ENCODE measurements at regions of chr2 and their contacts with region 1.

Region 1: GRCh38 chr2:57776916-57777315 is 269.7 kb upstream of the VRK2 start:
- DNase-seq: no peak
- H3K4me3 ChIP-seq: no peak overlapping the region
- CTCF ChIP-seq: no peak

Region 2: GRCh38 chr2:57740891-57741290 is 36.0 kb before region 1 on chr2:
- CTCF ChIA-PET with region 1: no interaction called
- POLR2A ChIA-PET with region 1: no interaction called
- DNase-seq: no peak
- H3K4me3 ChIP-seq: no peak overlapping the region
- CTCF ChIP-seq: no peak

Region 3: GRCh38 chr2:57759822-57760300 is 17.1 kb before region 1 on chr2:
- CTCF ChIA-PET with region 1: interaction called, 11 read pairs
- POLR2A ChIA-PET with region 1: no interaction called
- DNase-seq: peak; percentile 17
- H3K4me3 ChIP-seq: peak overlapping the region; percentile 51
- CTCF ChIP-seq: peak; percentile 96

Region 4: DNA sequence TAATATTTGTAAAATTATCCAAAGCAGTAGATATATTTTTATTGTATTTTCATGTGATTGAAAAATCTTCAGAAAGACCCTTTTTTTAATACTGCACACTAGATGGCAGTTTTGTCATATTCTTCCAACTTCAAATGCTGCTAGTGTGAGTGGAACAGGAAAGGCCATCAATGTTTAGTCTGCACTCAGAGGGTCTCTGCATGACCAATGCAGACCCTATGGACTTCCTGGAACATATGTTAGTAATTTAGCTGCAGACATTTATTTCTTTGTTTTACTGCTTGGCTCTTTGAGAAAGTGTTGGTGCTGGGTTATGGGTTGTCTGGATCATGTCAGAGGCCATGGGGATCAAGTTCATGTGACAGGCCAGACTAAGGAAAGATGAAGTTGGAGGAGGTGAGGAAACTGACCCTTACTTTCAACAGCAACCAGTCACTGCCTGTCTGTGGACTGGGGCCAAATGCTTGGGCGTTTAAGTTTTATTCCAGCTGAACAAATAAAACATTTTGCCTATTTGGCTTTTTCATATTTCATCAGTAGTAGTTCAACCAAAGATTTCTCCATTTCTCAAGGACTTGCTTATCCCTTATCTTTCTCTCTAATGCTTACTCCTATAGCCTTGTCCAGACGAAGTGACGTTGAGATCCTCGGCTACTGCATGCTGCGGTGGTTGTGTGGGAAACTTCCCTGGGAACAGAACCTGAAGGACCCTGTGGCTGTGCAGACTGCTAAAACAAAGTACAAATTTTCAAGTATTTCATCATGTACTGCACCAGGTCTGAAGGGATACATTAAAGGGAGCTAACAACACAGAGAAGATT is 354.5 kb after region 1 on chr2:
- CTCF ChIA-PET with region 1: no interaction called
- POLR2A ChIA-PET with region 1: no interaction called
- DNase-seq: no peak
- H3K4me3 ChIP-seq: no peak overlapping the region
- CTCF ChIP-seq: no peak